ENCODE measurements at regions of chr20 and their contacts with region 1.

Region 1: GRCh38 chr20:38412877-38413577 is 22.1 kb downstream of the SNHG17 start:
- DNase-seq: no peak
- H3K4me3 Mint-ChIP-seq: no peak overlapping the region
- H3K27ac Mint-ChIP-seq: no peak overlapping the region
- H3K4me1 Mint-ChIP-seq: no peaks in the 10 kb centered on the region
- H3K27me3 Mint-ChIP-seq: no peaks in the 10 kb centered on the region
- CTCF ChIP-seq: no peak

Region 2: GRCh38 chr20:37956084-37956483 is 456.9 kb before region 1 on chr20:
- CTCF ChIA-PET with region 1: no interaction called
- POLR2A ChIA-PET with region 1: no interaction called
- intact Hi-C with region 1: no loop called
- DNase-seq: no peak
- H3K4me3 Mint-ChIP-seq: no peak overlapping the region
- H3K27ac Mint-ChIP-seq: no peak overlapping the region
- H3K4me1 Mint-ChIP-seq: peaks cover 11% of the 10 kb centered on the region
- H3K27me3 Mint-ChIP-seq: peaks cover 23% of the 10 kb centered on the region
- CTCF ChIP-seq: no peak

Region 3: GRCh38 chr20:38337561-38338140 is 75.4 kb before region 1 on chr20:
- CTCF ChIA-PET with region 1: interaction called, 14 read pairs
- POLR2A ChIA-PET with region 1: interaction called, 5 read pairs
- intact Hi-C with region 1: loop called (anchors 1 kb)
- DNase-seq: peak; percentile 27
- H3K4me3 Mint-ChIP-seq: no peak overlapping the region
- H3K27ac Mint-ChIP-seq: no peak overlapping the region
- H3K4me1 Mint-ChIP-seq: no peaks in the 10 kb centered on the region
- H3K27me3 Mint-ChIP-seq: peaks cover 36% of the 10 kb centered on the region
- CTCF ChIP-seq: peak; percentile 34

Region 4: GRCh38 chr20:38485041-38485440 is 72.0 kb after region 1 on chr20:
- CTCF ChIA-PET with region 1: no interaction called
- POLR2A ChIA-PET with region 1: no interaction called
- intact Hi-C with region 1: no loop called
- DNase-seq: no peak
- H3K4me3 Mint-ChIP-seq: no peak overlapping the region
- H3K27ac Mint-ChIP-seq: no peak overlapping the region
- H3K4me1 Mint-ChIP-seq: peaks cover 6% of the 10 kb centered on the region
- H3K27me3 Mint-ChIP-seq: no peaks in the 10 kb centered on the region
- CTCF ChIP-seq: no peak

Region 5: DNA sequence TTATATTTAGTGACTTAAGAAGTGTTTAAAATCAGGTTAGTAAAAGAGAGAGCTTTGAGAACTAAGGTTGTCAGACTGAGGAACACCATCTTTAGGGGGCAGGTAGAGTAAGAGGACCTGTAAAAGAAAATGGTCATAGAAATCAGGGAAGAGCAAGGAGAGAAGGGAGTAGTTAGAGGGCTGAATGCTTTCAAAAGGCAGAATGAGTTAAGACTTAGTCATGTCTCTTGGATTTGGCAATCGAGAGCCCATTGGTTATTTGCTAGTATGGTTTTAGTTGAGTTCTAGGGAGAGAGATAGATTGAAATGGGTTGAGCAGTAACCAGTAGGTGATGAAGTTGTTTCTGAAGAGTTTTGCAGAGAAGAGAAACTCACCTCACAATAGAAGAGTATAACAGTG is 110.7 kb after region 1 on chr20:
- CTCF ChIA-PET with region 1: no interaction called
- POLR2A ChIA-PET with region 1: no interaction called
- intact Hi-C with region 1: no loop called
- DNase-seq: peak; percentile 71
- H3K4me3 Mint-ChIP-seq: no peak overlapping the region
- H3K27ac Mint-ChIP-seq: peak overlapping the region; percentile 3
- H3K4me1 Mint-ChIP-seq: peaks cover 14% of the 10 kb centered on the region
- H3K27me3 Mint-ChIP-seq: no peaks in the 10 kb centered on the region
- CTCF ChIP-seq: no peak

Region 6: GRCh38 chr20:38873050-38873581 is 460.1 kb after region 1 on chr20:
- CTCF ChIA-PET with region 1: no interaction called
- POLR2A ChIA-PET with region 1: no interaction called
- intact Hi-C with region 1: no loop called
- DNase-seq: no peak
- H3K4me3 Mint-ChIP-seq: no peak overlapping the region
- H3K27ac Mint-ChIP-seq: no peak overlapping the region
- H3K4me1 Mint-ChIP-seq: peaks cover 25% of the 10 kb centered on the region
- H3K27me3 Mint-ChIP-seq: no peaks in the 10 kb centered on the region
- CTCF ChIP-seq: no peak

Measured in MCF 10A (cell line).